Dorsolateral prefrontal cortex (tissue), 120 donors: ENCODE measurements at regions of chr1 and their contacts with region 1.

Region 1: GRCh38 chr1:203408486-203409427 is 57.8 kb upstream of the FMOD start:
- DNase-seq: peak; percentile 38 to 94 (median 84)
- H3K4me3 ChIP-seq: peak overlapping the region in 6 of 59 donors; percentile 5 to 37 (median 14)
- H3K27ac ChIP-seq: peak overlapping the region in 56 of 59 donors; percentile 1 to 87 (median 67)
- H3K27me3 ChIP-seq: no peaks in the 10 kb centered on the region
- CTCF ChIP-seq: peak in 3 of 56 donors; percentile 12 to 30 (median 15)

Region 2: DNA sequence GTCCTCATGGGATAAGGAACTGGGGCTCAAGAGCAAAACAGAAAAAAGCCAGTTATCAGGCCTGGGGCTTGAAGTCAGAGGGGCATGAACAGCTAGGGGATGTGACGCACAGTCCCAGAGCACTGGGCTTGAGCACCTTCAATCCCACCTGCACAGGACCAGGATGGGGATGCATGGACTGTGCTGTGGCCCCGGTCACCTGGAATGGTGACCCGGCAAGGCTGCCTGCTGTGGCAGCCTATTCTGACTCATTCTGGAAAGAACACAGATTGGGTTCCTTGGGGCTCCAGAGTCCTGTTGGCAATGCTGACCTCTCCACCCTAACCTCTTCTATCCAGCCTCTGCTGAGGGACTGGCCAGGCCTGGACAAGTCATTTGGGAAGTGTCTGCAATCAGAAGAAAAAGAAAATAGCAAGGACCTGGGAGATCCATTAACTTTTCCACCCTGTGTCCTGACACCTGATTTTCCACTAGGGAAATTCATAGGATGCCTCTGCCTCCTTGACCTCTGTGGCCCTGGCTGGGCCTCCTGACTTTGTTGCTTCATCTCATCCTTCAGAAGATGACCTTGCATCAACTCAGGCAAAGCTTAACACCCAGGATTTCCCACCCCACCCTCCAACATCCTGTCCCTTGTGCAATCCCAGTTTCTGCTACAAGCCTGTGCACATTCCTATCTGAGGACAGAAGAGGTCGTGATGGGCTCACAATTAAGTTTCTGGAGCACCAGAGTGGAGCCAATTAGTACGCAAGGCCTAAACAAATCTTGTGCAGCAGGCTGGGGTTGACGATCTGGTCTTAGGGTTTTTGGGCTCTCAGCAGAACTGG is 39.9 kb before region 1 on chr1:
- intact Hi-C with region 1: no loop called
- DNase-seq: no peak
- H3K4me3 ChIP-seq: no peak overlapping the region
- H3K27ac ChIP-seq: peak overlapping the region in 1 of 59 donors; percentile 18
- H3K27me3 ChIP-seq: no peaks in the 10 kb centered on the region
- CTCF ChIP-seq: peak in 25 of 56 donors; percentile 8 to 46 (median 20)

Region 3: GRCh38 chr1:203440771-203441170 is 32.0 kb after region 1 on chr1:
- intact Hi-C with region 1: loop called in 1 of 2 experiments (anchors 2 kb)
- DNase-seq: peak; percentile 64 to 83 (median 76)
- H3K4me3 ChIP-seq: no peak overlapping the region
- H3K27ac ChIP-seq: peak overlapping the region in 40 of 59 donors; percentile 1 to 78 (median 44)
- H3K27me3 ChIP-seq: no peaks in the 10 kb centered on the region
- CTCF ChIP-seq: peak in 55 of 56 donors; percentile 17 to 84 (median 68)